PC-9 (cell line): ENCODE measurements at regions of chr5 and their contacts with region 1.

Region 1: DNA sequence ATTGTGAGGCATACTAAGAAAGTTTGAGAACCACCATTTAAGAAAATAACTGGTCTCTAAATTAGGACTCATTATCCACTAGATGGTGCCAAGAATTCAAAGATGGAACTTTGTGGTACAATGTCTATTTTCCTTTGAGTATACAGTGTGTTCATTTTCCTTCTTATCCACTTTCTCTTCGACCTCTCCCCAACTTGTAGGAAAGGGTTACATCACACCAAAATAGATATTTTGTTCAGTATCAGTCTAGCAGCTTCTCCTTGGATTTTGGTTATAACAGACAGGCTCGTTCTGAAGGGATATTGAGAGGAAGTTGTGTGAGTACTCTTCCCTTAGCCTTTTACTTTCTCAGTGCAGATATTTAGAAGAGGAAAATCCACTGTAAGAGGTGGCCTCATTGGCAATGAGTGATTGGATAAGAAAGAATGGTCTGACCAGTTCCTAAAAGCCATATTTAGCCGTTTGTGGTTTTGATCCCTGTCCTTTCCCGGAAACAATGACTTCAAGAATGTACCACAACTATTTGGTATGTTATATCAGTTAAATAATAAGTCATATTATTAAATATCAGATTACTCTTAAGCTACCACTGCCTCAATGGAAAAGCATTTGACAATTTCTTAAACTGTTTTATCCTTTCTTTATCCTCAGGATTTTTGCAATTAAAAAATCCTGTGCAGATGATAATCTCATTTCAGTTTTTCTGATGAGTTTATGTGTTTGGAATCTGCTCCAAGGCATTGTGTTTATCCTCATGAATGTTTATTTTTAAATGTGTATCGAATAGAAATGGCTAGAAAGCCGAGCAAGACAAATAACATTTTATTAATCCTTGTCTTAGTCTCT is 69.0 kb upstream of the GRAMD2B start:
- DNase-seq: peak; percentile 43 to 97
- H3K4me3 ChIP-seq: peak overlapping the region; percentile 48; the same call in 1 of the 2 replicates
- H3K27ac ChIP-seq: peak overlapping the region; percentile 89
- H3K4me1 ChIP-seq: peaks cover 37% of the 10 kb centered on the region
- H3K27me3 ChIP-seq: no peaks in the 10 kb centered on the region
- CTCF ChIP-seq: peak; percentile 74

Region 2: GRCh38 chr5:125848746-125849145 is 505.5 kb before region 1 on chr5:
- CTCF ChIA-PET with region 1: no interaction called
- POLR2A ChIA-PET with region 1: no interaction called
- intact Hi-C with region 1: no loop called
- DNase-seq: no peak
- H3K4me3 ChIP-seq: no peak overlapping the region
- H3K27ac ChIP-seq: no peak overlapping the region
- H3K4me1 ChIP-seq: no peaks in the 10 kb centered on the region
- H3K27me3 ChIP-seq: no peaks in the 10 kb centered on the region
- CTCF ChIP-seq: no peak

Region 3: DNA sequence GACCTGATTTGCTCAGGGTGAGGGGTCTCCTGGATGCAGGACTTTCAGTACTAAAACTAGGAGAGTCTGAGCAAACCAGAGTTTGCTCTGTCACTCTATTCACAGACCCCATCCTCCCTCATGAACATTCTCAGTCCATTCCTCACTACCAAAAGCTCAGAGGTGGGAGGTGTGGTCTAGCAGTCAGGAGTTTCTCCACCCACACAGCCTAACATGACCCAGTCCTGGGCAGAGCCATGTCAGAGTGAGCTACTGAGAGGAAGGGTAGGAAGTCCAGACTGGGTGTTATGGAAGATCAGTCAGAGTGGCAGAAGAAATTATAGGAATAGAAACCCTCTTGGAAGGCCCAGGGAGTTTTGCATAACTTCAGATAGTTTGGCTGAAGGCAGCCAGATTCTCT is 44.4 kb before region 1 on chr5:
- CTCF ChIA-PET with region 1: no interaction called
- POLR2A ChIA-PET with region 1: no interaction called
- intact Hi-C with region 1: no loop called
- DNase-seq: no peak
- H3K4me3 ChIP-seq: no peak overlapping the region
- H3K27ac ChIP-seq: no peak overlapping the region
- H3K4me1 ChIP-seq: no peaks in the 10 kb centered on the region
- H3K27me3 ChIP-seq: no peaks in the 10 kb centered on the region
- CTCF ChIP-seq: no peak

Region 4: DNA sequence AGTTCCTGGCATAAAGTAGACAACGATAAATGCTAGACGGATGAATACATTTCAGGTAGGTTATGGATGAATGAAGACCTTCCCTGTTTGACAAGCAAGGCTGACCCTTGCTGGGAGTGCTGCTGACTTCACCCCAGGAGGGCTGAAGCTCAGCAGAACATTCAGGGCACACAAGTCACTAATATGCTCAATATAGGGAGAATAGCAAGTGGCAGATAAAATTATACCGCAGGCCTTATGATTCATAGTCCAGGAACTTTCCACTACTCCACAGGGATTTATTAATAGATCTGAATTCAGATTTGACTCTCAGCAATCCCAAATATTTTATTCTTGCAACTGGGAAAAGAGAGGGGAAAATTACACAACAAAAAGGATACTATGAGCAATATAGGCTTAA is 30.8 kb after region 1 on chr5:
- CTCF ChIA-PET with region 1: interaction called, 5 read pairs
- POLR2A ChIA-PET with region 1: no interaction called
- intact Hi-C with region 1: loop called (anchors 1 kb)
- DNase-seq: peak; percentile 52 to 93
- H3K4me3 ChIP-seq: peak overlapping the region; percentile 32; the same call in 1 of the 2 replicates
- H3K27ac ChIP-seq: peak overlapping the region; percentile 89
- H3K4me1 ChIP-seq: peaks cover 53% of the 10 kb centered on the region
- H3K27me3 ChIP-seq: no peaks in the 10 kb centered on the region
- CTCF ChIP-seq: no peak

Region 5: GRCh38 chr5:126446498-126447224 is 92.4 kb after region 1 on chr5:
- CTCF ChIA-PET with region 1: no interaction called
- POLR2A ChIA-PET with region 1: interaction called, 3 read pairs
- intact Hi-C with region 1: loop called (anchors 1 kb)
- DNase-seq: peak; percentile 63 to 77
- H3K4me3 ChIP-seq: no peak overlapping the region
- H3K27ac ChIP-seq: peak overlapping the region; percentile 83
- H3K4me1 ChIP-seq: peaks cover 17% of the 10 kb centered on the region
- H3K27me3 ChIP-seq: no peaks in the 10 kb centered on the region
- CTCF ChIP-seq: no peak

Region 6: GRCh38 chr5:126544087-126544740 is 190.0 kb after region 1 on chr5:
- CTCF ChIA-PET with region 1: interaction called, 29 read pairs
- POLR2A ChIA-PET with region 1: no interaction called
- intact Hi-C with region 1: loop called (anchors 1 kb)
- DNase-seq: no peak
- H3K4me3 ChIP-seq: no peak overlapping the region
- H3K27ac ChIP-seq: no peak overlapping the region
- H3K4me1 ChIP-seq: no peaks in the 10 kb centered on the region
- H3K27me3 ChIP-seq: no peaks in the 10 kb centered on the region
- CTCF ChIP-seq: peak; percentile 54

Region 7: GRCh38 chr5:126776497-126777256 is 422.4 kb after region 1 on chr5 and contains the start of gene LMNB1:
- CTCF ChIA-PET with region 1: no interaction called
- POLR2A ChIA-PET with region 1: no interaction called
- intact Hi-C with region 1: loop called (anchors 10 kb)
- DNase-seq: peak; percentile 88 to 97
- H3K4me3 ChIP-seq: peak within 1 kb of the TSS; percentile 83
- H3K27ac ChIP-seq: peak within 1 kb of the TSS; percentile 60
- H3K4me1 ChIP-seq: peaks cover 25% of the 10 kb centered on the region
- H3K27me3 ChIP-seq: no peaks in the 10 kb centered on the region
- CTCF ChIP-seq: no peak
- total RNA-seq, gene LMNB1: 103 and 117 TPM in 2 replicates

Region 8: DNA sequence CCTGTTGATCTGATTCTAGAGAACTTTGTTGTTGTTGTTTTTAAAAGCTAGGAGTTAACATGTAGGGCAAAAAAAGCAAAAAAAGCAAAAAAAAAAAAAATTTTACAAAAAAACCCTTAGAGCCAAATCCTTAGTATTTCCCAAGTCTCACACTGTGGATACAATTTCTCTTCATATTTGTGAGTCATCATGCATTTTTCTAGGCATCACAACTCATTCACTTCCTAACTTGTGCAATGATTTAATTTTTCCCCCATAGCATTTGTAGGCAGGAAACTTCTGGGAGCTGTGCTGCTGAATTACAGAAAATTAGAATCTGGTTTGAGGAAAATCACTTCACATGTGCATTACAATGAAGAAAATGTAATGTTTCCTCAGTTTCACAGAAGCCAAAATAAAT is 584.2 kb after region 1 on chr5:
- CTCF ChIA-PET with region 1: no interaction called
- POLR2A ChIA-PET with region 1: no interaction called
- intact Hi-C with region 1: no loop called
- DNase-seq: peak in 1 of 2 experiments; percentile 58
- H3K4me3 ChIP-seq: no peak overlapping the region
- H3K27ac ChIP-seq: no peak overlapping the region
- H3K4me1 ChIP-seq: peaks cover 12% of the 10 kb centered on the region; the same call in 1 of the 2 replicates
- H3K27me3 ChIP-seq: no peaks in the 10 kb centered on the region
- CTCF ChIP-seq: no peak